Right cardiac atrium (tissue), 5 donors: ENCODE measurements at regions of chr18 and their contacts with region 1.

Region 1: GRCh38 chr18:79528846-79529245 is 133.1 kb downstream of the NFATC1 start:
- DNase-seq: peak; percentile 64 to 83 (median 73)
- ATAC-seq: no peak
- H3K4me3 ChIP-seq: no peak overlapping the region
- H3K27ac ChIP-seq: no peak overlapping the region
- H3K4me1 ChIP-seq: no peaks in the 10 kb centered on the region
- H3K27me3 ChIP-seq: no peaks in the 10 kb centered on the region

Region 2: GRCh38 chr18:79258447-79258846 is 270.4 kb before region 1 on chr18:
- intact Hi-C with region 1: no loop called
- DNase-seq: no peak
- ATAC-seq: peak; percentile 83 to 90
- H3K4me3 ChIP-seq: no peak overlapping the region
- H3K27ac ChIP-seq: peak overlapping the region; percentile 42
- H3K4me1 ChIP-seq: peaks cover 3% of the 10 kb centered on the region
- H3K27me3 ChIP-seq: no peaks in the 10 kb centered on the region

Region 3: GRCh38 chr18:79378542-79379250 is 150.2 kb before region 1 on chr18:
- intact Hi-C with region 1: loop called (anchors 2 to 5 kb)
- DNase-seq: peak; percentile 72 to 92 (median 91)
- ATAC-seq: peak; percentile 78 to 82
- H3K4me3 ChIP-seq: no peak overlapping the region
- H3K27ac ChIP-seq: no peak overlapping the region
- H3K4me1 ChIP-seq: no peaks in the 10 kb centered on the region
- H3K27me3 ChIP-seq: no peaks in the 10 kb centered on the region

Region 4: GRCh38 chr18:79484661-79485621 is 43.9 kb before region 1 on chr18:
- intact Hi-C with region 1: no loop called
- DNase-seq: peak; percentile 47 to 80 (median 75)
- ATAC-seq: peak; percentile 35 to 72
- H3K4me3 ChIP-seq: no peak overlapping the region
- H3K27ac ChIP-seq: no peak overlapping the region
- H3K4me1 ChIP-seq: no peaks in the 10 kb centered on the region
- H3K27me3 ChIP-seq: no peaks in the 10 kb centered on the region

Region 5: GRCh38 chr18:79630281-79631095 is 101.6 kb after region 1 on chr18:
- intact Hi-C with region 1: loop called in 1 of 4 experiments (anchors 10 kb)
- DNase-seq: no peak
- ATAC-seq: no peak
- H3K4me3 ChIP-seq: no peak overlapping the region
- H3K27ac ChIP-seq: no peak overlapping the region
- H3K4me1 ChIP-seq: no peaks in the 10 kb centered on the region
- H3K27me3 ChIP-seq: no peaks in the 10 kb centered on the region

Region 6: GRCh38 chr18:79644006-79644665 is 115.3 kb after region 1 on chr18:
- intact Hi-C with region 1: loop called (anchors 5 to 10 kb)
- DNase-seq: peak; percentile 64 to 86 (median 85)
- ATAC-seq: peak; percentile 73 to 83
- H3K4me3 ChIP-seq: no peak overlapping the region
- H3K27ac ChIP-seq: no peak overlapping the region
- H3K4me1 ChIP-seq: no peaks in the 10 kb centered on the region
- H3K27me3 ChIP-seq: no peaks in the 10 kb centered on the region